ENCODE measurements at regions of chr13 and their contacts with region 1.

Region 1: DNA sequence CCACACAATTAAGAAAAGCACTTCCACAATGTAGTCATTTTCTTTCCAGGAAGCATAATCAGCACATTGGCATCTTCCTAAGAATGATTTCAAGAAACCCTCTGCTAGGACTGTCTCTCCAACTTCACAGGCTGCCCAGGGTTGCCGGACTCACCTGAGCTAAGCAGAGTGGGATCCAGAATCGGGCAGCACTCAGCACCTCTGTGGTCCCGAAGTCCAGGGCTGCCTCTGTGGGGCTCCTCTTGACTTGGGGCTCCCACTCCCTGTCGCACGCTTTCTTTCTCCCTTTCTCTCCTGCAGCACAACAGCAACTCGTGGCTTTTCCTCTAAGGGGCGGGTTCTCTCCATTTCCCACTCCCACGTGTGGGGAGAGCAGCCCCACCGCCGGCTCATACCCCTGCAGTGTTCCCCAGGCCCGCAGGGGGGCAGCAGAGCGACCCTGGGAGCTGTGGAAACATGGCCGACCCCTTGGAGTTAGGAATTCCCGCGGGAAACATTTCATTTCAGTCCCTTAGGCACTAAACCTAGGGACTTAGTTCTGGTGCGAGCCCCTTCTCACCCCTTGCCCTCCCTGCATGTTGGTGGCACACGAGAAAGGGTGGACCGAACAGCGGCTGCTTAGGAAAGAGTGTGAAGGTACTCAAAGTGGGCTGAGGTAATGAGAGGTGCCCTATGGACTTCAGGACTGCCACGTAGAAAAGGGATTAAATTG is at the start of gene TMEM272:
- DNase-seq: peak in 2 of 3 donors; percentile 34 to 51
- H3K4me3 ChIP-seq: peak within 1 kb of the TSS in 1 of 3 experiments; percentile 20
- H3K4me3 Mint-ChIP-seq: peak within 1 kb of the TSS; percentile 66 to 77
- H3K27ac ChIP-seq: no peak within 1 kb of the TSS
- H3K27ac Mint-ChIP-seq: peak within 1 kb of the TSS in 1 of 7 donors; percentile 5
- H3K4me1 ChIP-seq: peaks cover 5 to 7% of the 10 kb centered on the region in 2 donors
- H3K4me1 Mint-ChIP-seq: peaks cover 20% of the 10 kb centered on the region
- H3K27me3 ChIP-seq: no peaks in the 10 kb centered on the region
- H3K27me3 Mint-ChIP-seq: peaks cover 0 to 5% (median 4%) of the 10 kb centered on the region in 3 donors
- CTCF ChIP-seq: peak; percentile 95
- polyA plus RNA-seq, gene TMEM272: 0.07 TPM in 1 of 3 donors, not detected in the others

Region 2: DNA sequence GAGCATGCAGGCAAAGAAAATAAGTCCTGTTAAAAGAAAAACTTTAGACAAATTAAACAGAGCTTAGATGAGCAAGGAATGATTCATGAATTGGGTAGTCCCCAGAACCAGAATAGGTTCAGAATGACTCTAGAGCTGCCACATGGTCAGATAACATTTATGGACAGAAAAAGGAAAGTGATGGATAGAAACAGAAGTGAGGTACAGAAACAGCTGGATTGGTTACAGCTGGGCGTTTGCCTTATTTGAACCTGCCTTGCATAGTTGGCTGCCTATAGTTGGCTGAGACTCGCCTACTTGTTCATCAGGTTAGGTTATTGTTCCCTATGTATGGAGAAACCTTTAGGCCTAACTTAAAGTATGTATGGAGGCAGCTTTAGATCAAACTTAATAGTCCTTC is 225.4 kb before region 1 on chr13:
- intact Hi-C with region 1: no loop called
- DNase-seq: no peak
- H3K4me3 ChIP-seq: no peak overlapping the region
- H3K4me3 Mint-ChIP-seq: no peak overlapping the region
- H3K27ac ChIP-seq: peak overlapping the region in 1 of 2 donors; percentile 53
- H3K27ac Mint-ChIP-seq: peak overlapping the region in 2 of 7 donors; percentile 9 to 42
- H3K4me1 ChIP-seq: peaks cover 13 to 15% of the 10 kb centered on the region in 2 donors
- H3K4me1 Mint-ChIP-seq: peaks cover 42% of the 10 kb centered on the region
- H3K27me3 ChIP-seq: no peaks in the 10 kb centered on the region
- H3K27me3 Mint-ChIP-seq: no peaks in the 10 kb centered on the region
- CTCF ChIP-seq: no peak

Region 3: GRCh38 chr13:51797664-51798488 is 47.1 kb before region 1 on chr13:
- intact Hi-C with region 1: loop called in 1 of 2 experiments (anchors 10 kb)
- DNase-seq: no peak
- H3K4me3 ChIP-seq: no peak overlapping the region
- H3K4me3 Mint-ChIP-seq: no peak overlapping the region
- H3K27ac ChIP-seq: no peak overlapping the region
- H3K27ac Mint-ChIP-seq: peak overlapping the region in 2 of 7 donors; percentile 22 to 30
- H3K4me1 ChIP-seq: peaks cover 33 to 34% of the 10 kb centered on the region in 2 donors
- H3K4me1 Mint-ChIP-seq: peaks cover 38% of the 10 kb centered on the region
- H3K27me3 ChIP-seq: peaks cover 0 to 7% of the 10 kb centered on the region in 2 donors
- H3K27me3 Mint-ChIP-seq: peaks cover 6 to 29% (median 24%) of the 10 kb centered on the region in 3 donors
- CTCF ChIP-seq: no peak

Region 4: GRCh38 chr13:51814825-51815650 is 30.0 kb before region 1 on chr13:
- intact Hi-C with region 1: loop called in 1 of 2 experiments (anchors 5 kb)
- DNase-seq: peak; percentile 60 to 77 (median 71)
- H3K4me3 ChIP-seq: peak overlapping the region; percentile 8 to 68 (median 40)
- H3K4me3 Mint-ChIP-seq: peak overlapping the region; percentile 73 to 90
- H3K27ac ChIP-seq: peak overlapping the region in 1 of 2 donors; percentile 79
- H3K27ac Mint-ChIP-seq: peak overlapping the region; percentile 66 to 94 (median 82)
- H3K4me1 ChIP-seq: peaks cover 41 to 51% of the 10 kb centered on the region in 2 donors
- H3K4me1 Mint-ChIP-seq: peaks cover 64% of the 10 kb centered on the region
- H3K27me3 ChIP-seq: no peaks in the 10 kb centered on the region
- H3K27me3 Mint-ChIP-seq: peaks cover 0 to 3% (median 2%) of the 10 kb centered on the region in 3 donors
- CTCF ChIP-seq: peak; percentile 93